Activated CD8-positive, alpha-beta memory T cell treated with anti-CD3 and anti-CD28 coated beads, Interleukin-2, amount 10 ng/mL, durations not matched to agents 7 days and 5 days (primary cell): ENCODE measurements at regions of chr22 and their contacts with region 1.

Region 1: GRCh38 chr22:37121887-37122591 is 12.5 kb upstream of the TMPRSS6 start:
- DNase-seq: peak; percentile 98
- ATAC-seq: peak; percentile 97
- H3K4me3 Mint-ChIP-seq: peak overlapping the region; percentile 70
- H3K27ac Mint-ChIP-seq: peak overlapping the region; percentile 99
- H3K4me1 Mint-ChIP-seq: peaks cover 72% of the 10 kb centered on the region
- H3K27me3 Mint-ChIP-seq: no peaks in the 10 kb centered on the region

Region 2: DNA sequence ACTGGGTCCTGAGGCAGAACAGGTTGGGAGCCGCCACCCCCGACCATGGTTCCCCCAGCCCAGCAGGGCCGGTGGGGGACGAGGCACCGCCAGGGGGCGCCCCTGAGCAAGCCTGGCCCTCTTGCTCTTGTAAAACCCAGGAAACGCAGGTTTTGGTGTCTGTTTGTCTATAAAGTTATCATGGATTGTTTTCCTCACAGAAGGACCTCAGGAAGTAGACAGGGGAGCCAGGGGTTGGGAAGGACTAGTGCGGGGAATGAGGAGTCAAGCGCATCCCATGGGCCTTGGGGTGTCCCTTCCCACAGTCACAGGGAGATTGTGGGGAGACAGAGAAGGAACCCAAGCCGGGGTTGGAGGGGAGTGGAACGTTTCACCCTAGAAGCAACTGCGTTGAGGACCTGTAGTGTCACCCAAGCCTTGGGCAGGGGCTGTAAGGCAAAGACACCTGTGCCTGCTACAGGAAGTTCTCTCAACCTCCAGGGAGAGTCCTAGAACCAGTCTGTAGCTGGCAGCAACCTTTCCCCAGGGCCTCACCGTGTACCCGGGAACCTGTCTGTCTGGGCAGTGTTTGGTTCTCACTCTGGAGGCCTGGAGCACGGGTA is 44.1 kb before region 1 on chr22:
- CTCF ChIA-PET with region 1: interaction called, 91 read pairs
- DNase-seq: peak; percentile 90
- ATAC-seq: peak; percentile 16
- H3K4me3 Mint-ChIP-seq: peak overlapping the region; percentile 32
- H3K27ac Mint-ChIP-seq: peak overlapping the region; percentile 99
- H3K4me1 Mint-ChIP-seq: peaks cover 69% of the 10 kb centered on the region
- H3K27me3 Mint-ChIP-seq: no peaks in the 10 kb centered on the region

Region 3: GRCh38 chr22:37105154-37105553 is 16.9 kb before region 1 on chr22:
- CTCF ChIA-PET with region 1: interaction called, 14 read pairs
- DNase-seq: no peak
- ATAC-seq: no peak
- H3K4me3 Mint-ChIP-seq: no peak overlapping the region
- H3K27ac Mint-ChIP-seq: no peak overlapping the region
- H3K4me1 Mint-ChIP-seq: peaks cover 20% of the 10 kb centered on the region
- H3K27me3 Mint-ChIP-seq: no peaks in the 10 kb centered on the region

Region 4: GRCh38 chr22:37260901-37261336 is 138.9 kb after region 1 on chr22:
- CTCF ChIA-PET with region 1: no interaction called
- DNase-seq: peak; percentile 75
- ATAC-seq: peak; percentile 77
- H3K4me3 Mint-ChIP-seq: no peak overlapping the region
- H3K27ac Mint-ChIP-seq: peak overlapping the region; percentile 42
- H3K4me1 Mint-ChIP-seq: peaks cover 23% of the 10 kb centered on the region
- H3K27me3 Mint-ChIP-seq: peaks cover 6% of the 10 kb centered on the region